ENCODE measurements at regions of chr11 and their contacts with region 1.

Region 1: DNA sequence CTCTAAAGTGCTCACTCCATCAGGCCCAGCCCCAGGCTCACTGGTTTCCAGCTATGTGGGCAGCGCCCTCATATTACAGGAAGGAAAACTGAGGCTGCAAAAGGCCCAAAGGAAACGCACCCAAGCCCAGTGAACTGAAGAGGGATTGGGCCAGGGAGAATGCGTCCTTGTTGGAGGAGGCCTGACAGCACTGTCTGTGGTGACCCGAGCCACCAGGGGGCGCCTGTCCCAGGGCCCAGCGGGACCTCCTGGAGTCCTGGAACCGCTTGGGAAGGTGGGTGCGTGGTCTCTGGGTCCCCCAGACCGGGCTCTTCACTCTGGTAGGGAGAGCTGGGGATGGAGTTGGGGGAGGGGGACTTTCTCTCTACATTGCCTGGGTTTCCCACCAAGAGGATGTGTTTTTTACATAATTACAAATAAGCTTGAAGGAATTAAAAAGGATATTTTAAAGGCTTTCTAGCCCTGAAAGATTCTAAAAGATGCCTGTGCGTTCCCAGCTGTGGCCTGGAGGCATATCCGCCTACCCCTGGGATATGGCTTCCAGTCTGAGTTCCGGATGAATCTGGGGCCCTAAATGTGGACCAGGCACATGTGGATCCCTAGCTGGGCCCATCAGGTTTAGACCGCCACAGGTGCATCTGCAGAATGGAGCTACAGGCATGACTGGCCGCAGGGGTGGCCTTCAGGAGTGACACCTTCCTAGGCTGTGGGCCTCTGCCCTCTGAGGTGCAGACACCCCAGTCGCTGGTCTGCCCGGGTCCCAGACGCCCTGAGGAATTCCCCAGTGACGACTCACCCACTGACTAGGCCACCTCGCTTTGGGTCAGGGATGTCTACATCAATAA is 4.2 kb downstream of the SPI1 start:
- DNase-seq: peak; percentile 76
- H3K4me3 ChIP-seq: no peak overlapping the region
- H3K27ac ChIP-seq: peak overlapping the region; percentile 44
- H3K4me1 ChIP-seq: peaks cover 9% of the 10 kb centered on the region
- H3K27me3 ChIP-seq: peaks cover 1% of the 10 kb centered on the region in 2 experiments
- CTCF ChIP-seq: peak; percentile 90 to 99
- POLR2A ChIP-seq: no peak

Region 2: DNA sequence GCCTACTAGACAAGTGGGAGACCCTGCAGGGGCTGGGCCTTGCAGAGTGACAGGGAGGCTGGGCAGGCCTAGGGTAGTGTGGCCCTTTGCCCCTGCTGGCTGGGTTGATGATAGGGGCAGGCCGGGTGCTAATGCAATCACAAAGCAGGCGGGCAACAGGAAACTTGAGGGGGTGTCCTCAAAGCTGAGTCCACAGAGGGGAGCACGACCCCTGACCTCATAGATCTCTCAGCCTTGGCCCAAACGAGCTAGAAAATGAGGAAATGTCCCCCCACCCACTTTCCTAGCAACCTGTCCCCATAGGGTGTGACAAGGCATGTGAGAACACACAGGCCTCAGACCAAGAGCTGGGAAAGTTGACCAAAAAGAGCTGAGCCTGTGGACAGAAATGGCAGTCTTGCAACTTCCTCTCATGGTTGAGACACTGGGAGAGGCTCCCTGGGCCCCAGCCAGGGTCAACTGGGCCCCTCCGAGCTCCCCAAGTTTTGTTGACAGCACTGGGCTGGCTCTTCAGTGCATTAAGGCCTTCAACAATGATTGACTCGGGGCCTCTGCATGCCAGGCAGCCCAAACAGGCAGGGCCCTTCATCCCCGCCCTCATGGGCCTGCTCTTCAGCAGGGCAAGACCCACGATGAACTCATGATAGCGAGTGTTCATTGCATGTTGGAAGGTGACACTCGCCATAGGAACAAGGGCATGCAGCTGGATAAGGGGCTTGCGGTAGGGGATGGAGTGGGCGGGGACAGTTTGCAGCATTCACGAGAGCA is 14.0 kb after region 1 on chr11:
- CTCF ChIA-PET with region 1: interaction called, 76 read pairs
- POLR2A ChIA-PET with region 1: no interaction called
- dilution Hi-C with region 1: no loop called
- intact Hi-C with region 1: no loop called
- DNase-seq: no peak
- H3K4me3 ChIP-seq: no peak overlapping the region
- H3K27ac ChIP-seq: no peak overlapping the region
- H3K4me1 ChIP-seq: no peaks in the 10 kb centered on the region
- H3K27me3 ChIP-seq: no peaks in the 10 kb centered on the region
- CTCF ChIP-seq: no peak
- POLR2A ChIP-seq: no peak

Region 3: DNA sequence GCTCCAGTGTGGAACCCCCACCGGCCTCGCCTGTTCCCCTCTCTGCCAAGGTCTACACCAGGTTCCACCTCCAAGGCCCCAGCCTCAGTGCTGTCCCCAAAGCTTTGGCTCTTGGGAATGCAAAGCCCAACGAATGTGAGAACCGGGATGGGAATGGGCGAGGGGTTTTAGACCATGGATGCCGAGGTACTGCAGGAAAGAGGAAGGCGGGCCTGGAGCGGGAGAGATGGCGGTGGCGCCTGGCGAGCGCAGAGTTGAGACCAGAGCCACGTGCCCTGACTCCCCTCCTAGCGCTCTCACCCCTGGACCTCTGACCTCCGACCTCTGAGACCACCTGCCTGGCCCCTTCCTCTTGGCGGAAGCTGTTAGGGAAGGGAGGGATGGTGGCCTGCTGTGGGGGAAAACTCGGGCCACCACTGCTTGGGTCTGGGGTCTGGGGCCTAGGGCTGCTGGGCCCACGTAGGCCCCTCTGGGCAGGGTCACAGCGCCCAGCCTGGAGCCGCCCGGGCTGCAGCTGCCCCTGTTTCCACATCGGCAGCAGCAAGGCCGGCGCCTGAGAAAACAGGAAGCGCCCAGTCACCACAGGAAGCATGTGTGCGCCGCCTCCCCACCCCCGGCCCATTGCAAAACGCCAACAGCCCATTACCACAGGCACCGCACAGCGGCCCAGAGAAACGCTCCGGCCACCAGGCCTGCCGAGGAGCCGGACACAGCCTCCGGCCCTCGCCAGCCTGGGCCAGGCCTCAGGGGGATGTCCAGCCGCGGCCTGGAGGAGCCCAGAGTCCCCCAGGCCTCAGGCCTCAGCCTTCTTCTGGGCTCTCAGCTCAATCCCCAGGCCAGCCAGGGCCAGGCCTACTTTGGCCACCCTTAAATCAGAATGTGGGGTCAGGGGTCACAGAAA is 20.5 kb after region 1 on chr11:
- CTCF ChIA-PET with region 1: interaction called, 76 read pairs
- POLR2A ChIA-PET with region 1: interaction called, 5 read pairs
- dilution Hi-C with region 1: no loop called
- intact Hi-C with region 1: loop called (anchors 1 kb)
- DNase-seq: peak; percentile 93
- H3K4me3 ChIP-seq: no peak overlapping the region
- H3K27ac ChIP-seq: peak overlapping the region; percentile 99
- H3K4me1 ChIP-seq: peaks cover 23% of the 10 kb centered on the region
- H3K27me3 ChIP-seq: no peaks in the 10 kb centered on the region
- CTCF ChIP-seq: no peak
- POLR2A ChIP-seq: peak; percentile 91

Region 4: DNA sequence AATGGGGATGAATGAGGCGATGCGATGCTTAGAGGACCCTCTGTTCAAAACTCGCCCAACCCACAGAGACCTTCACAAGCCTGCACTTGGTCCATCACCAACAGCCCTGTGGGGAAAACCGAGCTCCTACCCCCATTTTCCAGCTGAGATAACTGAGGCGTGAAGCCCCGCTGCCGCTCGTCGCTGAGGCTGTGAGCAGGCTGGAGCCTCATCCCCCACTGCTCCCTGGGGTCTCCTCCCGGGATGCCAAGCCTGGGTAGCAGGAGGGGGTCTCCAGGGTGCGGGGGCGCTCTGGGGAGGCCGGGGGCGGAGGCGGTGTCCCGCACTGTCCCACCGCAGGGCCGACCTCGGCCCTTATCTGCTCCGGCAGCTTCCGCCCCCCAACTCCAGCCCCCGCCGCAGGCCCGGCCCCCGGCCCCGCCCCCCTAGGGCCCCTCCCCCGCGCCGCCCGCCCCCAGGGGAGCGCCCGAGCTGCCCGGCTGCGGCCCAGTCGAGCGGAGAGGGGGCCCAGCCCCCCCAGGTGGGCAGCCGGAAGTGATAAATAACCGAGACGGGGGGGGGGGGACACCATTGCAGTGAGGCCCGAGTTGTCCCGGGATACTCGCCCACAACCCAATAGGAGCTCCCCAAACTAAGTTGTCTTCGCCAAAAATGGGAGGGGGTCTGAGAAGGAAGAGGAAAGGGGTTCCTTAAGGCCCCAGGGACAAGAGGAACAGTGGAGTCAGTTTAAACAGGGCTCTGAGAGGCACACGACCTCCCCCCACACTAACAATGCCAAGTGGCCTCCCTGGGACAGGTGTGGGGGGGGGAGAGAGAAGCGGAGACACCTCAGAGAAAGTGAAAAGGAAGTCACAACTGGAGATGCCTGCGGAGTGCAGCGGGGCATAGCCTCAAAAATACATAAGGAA is 26.0 kb after region 1 on chr11:
- CTCF ChIA-PET with region 1: interaction called, 76 read pairs
- POLR2A ChIA-PET with region 1: interaction called, 5 read pairs
- dilution Hi-C with region 1: no loop called
- intact Hi-C with region 1: no loop called
- DNase-seq: no peak
- H3K4me3 ChIP-seq: peak overlapping the region; percentile 30 to 60 (median 34)
- H3K27ac ChIP-seq: no peak overlapping the region
- H3K4me1 ChIP-seq: peaks cover 17% of the 10 kb centered on the region
- H3K27me3 ChIP-seq: no peaks in the 10 kb centered on the region
- CTCF ChIP-seq: no peak
- POLR2A ChIP-seq: peak; percentile 30

Region 5: DNA sequence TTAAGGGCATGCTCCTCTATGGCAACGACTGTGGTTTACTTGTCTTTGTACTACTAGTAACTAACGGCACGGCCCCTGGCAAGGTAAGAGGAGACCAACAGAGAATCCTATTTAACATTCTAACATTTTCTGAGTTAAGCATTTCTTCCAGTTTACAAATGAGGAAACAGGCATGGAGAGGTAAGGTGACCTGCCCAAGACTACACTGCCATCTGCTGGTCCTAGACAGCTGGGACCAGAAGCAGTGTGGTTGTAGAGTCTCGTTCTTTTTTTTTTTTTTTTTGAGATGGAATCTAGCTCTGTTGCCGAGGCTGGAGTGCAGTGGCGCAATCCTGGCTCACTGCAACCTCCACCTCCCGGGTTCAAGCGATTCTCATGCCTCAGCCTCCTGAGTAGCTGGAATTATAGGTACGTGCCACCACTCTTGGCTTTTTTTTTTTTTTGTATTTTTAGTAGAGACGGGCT is 80.1 kb after region 1 on chr11:
- CTCF ChIA-PET with region 1: interaction called, 18 read pairs
- POLR2A ChIA-PET with region 1: no interaction called
- dilution Hi-C with region 1: no loop called
- intact Hi-C with region 1: loop called (anchors 1 kb)
- DNase-seq: peak; percentile 75
- H3K4me3 ChIP-seq: no peak overlapping the region
- H3K27ac ChIP-seq: no peak overlapping the region
- H3K4me1 ChIP-seq: no peaks in the 10 kb centered on the region
- H3K27me3 ChIP-seq: no peaks in the 10 kb centered on the region
- CTCF ChIP-seq: peak; percentile 68 to 82
- POLR2A ChIP-seq: no peak

Region 6: GRCh38 chr11:47616726-47617416 is 242.8 kb after region 1 on chr11:
- CTCF ChIA-PET with region 1: interaction called, 5 read pairs
- POLR2A ChIA-PET with region 1: no interaction called
- dilution Hi-C with region 1: no loop called
- intact Hi-C with region 1: loop called (anchors 1 kb)
- DNase-seq: peak; percentile 68
- H3K4me3 ChIP-seq: no peak overlapping the region
- H3K27ac ChIP-seq: no peak overlapping the region
- H3K4me1 ChIP-seq: no peaks in the 10 kb centered on the region
- H3K27me3 ChIP-seq: no peaks in the 10 kb centered on the region
- CTCF ChIP-seq: peak; percentile 45 to 67
- POLR2A ChIP-seq: no peak

Region 7: GRCh38 chr11:47899801-47900200 is 525.7 kb after region 1 on chr11:
- CTCF ChIA-PET with region 1: no interaction called
- POLR2A ChIA-PET with region 1: no interaction called
- dilution Hi-C with region 1: no loop called
- intact Hi-C with region 1: no loop called
- DNase-seq: no peak
- H3K4me3 ChIP-seq: no peak overlapping the region
- H3K27ac ChIP-seq: no peak overlapping the region
- H3K4me1 ChIP-seq: no peaks in the 10 kb centered on the region
- H3K27me3 ChIP-seq: no peaks in the 10 kb centered on the region
- CTCF ChIP-seq: no peak
- POLR2A ChIP-seq: no peak